CD4-positive, alpha-beta T cell (primary cell): ENCODE measurements at regions of chr2 and their contacts with region 1.

Region 1: GRCh38 chr2:119366649-119367471 is at the starts of genes C2orf76 and DBI:
- DNase-seq: peak; percentile 82 to 97 (median 88)
- ATAC-seq: peak; percentile 93
- H3K4me3 ChIP-seq: peak within 1 kb of the TSS; percentile 94
- H3K4me3 Mint-ChIP-seq: peak within 1 kb of the TSS; percentile 91
- H3K27ac ChIP-seq: peak within 1 kb of the TSS; percentile 59 to 76
- H3K27ac Mint-ChIP-seq: peak within 1 kb of the TSS; percentile 89
- H3K4me1 ChIP-seq: peaks cover 41% of the 10 kb centered on the region
- H3K4me1 Mint-ChIP-seq: peaks cover 59% of the 10 kb centered on the region
- H3K27me3 ChIP-seq: no peaks in the 10 kb centered on the region
- H3K27me3 Mint-ChIP-seq: no peaks in the 10 kb centered on the region
- CTCF ChIP-seq: no peak
- total RNA-seq, gene C2orf76: 2.8 to 4.5 TPM
- total RNA-seq, gene DBI: 23.6 to 27.4 TPM

Region 2: DNA sequence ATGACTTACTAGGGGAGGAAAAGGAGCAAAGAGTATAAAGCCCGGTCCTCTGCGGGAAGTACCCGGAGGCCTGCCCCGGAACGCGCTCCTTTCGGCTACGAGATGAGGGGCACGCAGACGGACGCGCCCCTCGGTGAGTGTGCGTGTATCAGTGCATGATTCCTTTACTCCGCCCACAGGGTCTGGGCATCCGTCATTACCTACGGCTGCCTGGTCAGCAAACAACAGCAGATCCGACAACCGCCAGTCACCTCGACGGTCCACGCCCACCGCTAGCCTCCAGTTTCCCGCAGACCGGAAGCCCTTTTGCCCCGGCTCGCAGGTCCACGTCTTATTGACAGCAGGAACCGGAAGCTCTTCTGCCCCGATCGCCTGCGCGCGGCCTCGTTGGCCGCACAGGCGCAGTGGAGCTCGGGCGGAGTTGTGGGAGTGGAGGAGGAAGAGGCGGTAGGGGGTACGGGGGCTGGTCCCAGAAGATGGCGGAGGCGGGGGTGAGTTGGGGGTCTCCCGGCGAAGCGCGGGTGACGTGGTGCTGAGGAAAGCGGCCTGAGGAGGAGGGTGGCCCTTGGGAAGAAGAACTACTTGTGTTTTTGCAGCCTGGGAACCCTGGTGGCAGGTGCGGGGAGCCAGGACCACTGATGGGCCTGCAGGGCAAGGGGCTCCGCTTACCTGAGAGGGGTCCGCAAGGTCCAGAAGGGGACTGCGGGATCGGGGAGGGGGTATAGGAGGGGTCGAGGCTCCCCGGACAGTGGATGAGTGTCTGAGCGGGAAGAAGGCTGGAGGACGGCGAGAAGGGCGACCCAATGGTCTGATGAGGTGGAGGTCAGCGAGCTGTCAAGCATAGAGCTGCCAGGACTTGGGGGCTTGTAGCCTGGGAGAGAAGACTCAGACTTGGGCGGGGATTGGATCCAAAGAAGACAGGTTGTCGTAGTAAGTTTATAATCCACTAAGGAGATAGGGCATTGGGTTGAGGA is 1278.5 kb before region 1 on chr2 and contains the start of gene INSIG2:
- CTCF ChIA-PET with region 1: no interaction called
- POLR2A ChIA-PET with region 1: no interaction called
- intact Hi-C with region 1: loop called in 1 of 2 experiments (anchors 10 kb)
- DNase-seq: peak; percentile 71 to 95 (median 81)
- ATAC-seq: peak; percentile 88
- H3K4me3 ChIP-seq: peak within 1 kb of the TSS; percentile 91
- H3K4me3 Mint-ChIP-seq: peak within 1 kb of the TSS; percentile 97
- H3K27ac ChIP-seq: peak within 1 kb of the TSS; percentile 58 to 61
- H3K27ac Mint-ChIP-seq: peak within 1 kb of the TSS; percentile 88
- H3K4me1 ChIP-seq: peaks cover 10% of the 10 kb centered on the region
- H3K4me1 Mint-ChIP-seq: peaks cover 38% of the 10 kb centered on the region
- H3K27me3 ChIP-seq: no peaks in the 10 kb centered on the region
- H3K27me3 Mint-ChIP-seq: no peaks in the 10 kb centered on the region
- CTCF ChIP-seq: no peak
- total RNA-seq, gene INSIG2: 7.3 to 7.7 TPM

Region 3: DNA sequence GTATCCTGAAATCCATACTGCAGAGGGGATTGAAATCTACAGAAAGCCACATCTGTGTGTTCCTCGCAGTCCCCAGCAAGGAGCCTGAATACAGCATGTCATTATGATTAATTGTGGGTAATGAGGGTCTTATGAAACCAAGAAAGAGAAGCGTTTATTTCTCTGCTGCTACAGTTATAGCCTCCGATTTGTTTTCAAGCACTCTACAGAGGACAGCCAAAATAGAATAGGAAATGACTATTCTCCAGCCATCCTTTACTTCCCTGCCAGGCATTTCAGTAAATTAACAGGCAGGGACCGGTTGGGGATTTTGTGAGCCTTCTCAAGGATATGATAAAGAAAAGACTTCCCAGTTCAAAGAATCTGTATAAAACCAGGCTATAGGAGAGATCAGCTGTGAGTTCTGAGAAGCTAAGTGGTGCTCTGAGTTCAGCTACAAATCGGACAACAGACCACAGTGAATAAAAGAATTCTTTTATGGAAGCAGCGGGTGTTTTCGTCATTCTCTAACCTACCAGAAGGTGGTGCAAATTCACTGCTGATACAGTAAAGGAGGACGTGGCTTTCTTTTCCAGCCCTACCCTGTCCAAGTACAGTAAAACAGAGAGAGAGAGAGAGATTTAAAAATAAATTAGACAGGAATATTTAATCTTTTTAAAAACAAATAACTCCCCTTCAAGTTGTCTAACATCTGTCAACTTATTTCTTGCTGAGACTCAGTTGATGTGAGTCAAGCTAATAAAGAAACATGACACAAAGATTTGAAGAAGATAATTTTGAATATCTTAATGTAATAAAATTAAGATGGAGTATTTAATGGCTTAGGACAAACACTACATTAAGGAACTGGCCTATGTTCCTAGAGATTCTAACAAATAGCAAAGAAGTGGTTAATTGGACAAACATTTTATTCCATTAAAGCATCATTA is 1144.9 kb before region 1 on chr2:
- CTCF ChIA-PET with region 1: no interaction called
- POLR2A ChIA-PET with region 1: no interaction called
- intact Hi-C with region 1: loop called in 1 of 2 experiments (anchors 10 kb)
- DNase-seq: peak in 9 of 14 experiments; percentile 6 to 77 (median 10)
- ATAC-seq: peak; percentile 75
- H3K4me3 ChIP-seq: no peak overlapping the region
- H3K4me3 Mint-ChIP-seq: peak overlapping the region; percentile 12
- H3K27ac ChIP-seq: no peak overlapping the region
- H3K27ac Mint-ChIP-seq: no peak overlapping the region
- H3K4me1 ChIP-seq: peaks cover 19% of the 10 kb centered on the region
- H3K4me1 Mint-ChIP-seq: peaks cover 28% of the 10 kb centered on the region
- H3K27me3 ChIP-seq: peaks cover 44 to 70% of the 10 kb centered on the region in 2 experiments
- H3K27me3 Mint-ChIP-seq: peaks cover 78% of the 10 kb centered on the region
- CTCF ChIP-seq: peak; percentile 87

Region 4: GRCh38 chr2:119311356-119311755 is 55.5 kb before region 1 on chr2:
- CTCF ChIA-PET with region 1: no interaction called
- POLR2A ChIA-PET with region 1: no interaction called
- intact Hi-C with region 1: no loop called
- DNase-seq: no peak
- ATAC-seq: no peak
- H3K4me3 ChIP-seq: no peak overlapping the region
- H3K4me3 Mint-ChIP-seq: no peak overlapping the region
- H3K27ac ChIP-seq: no peak overlapping the region
- H3K27ac Mint-ChIP-seq: no peak overlapping the region
- H3K4me1 ChIP-seq: no peaks in the 10 kb centered on the region
- H3K4me1 Mint-ChIP-seq: no peaks in the 10 kb centered on the region
- H3K27me3 ChIP-seq: no peaks in the 10 kb centered on the region
- H3K27me3 Mint-ChIP-seq: no peaks in the 10 kb centered on the region
- CTCF ChIP-seq: no peak

Region 5: DNA sequence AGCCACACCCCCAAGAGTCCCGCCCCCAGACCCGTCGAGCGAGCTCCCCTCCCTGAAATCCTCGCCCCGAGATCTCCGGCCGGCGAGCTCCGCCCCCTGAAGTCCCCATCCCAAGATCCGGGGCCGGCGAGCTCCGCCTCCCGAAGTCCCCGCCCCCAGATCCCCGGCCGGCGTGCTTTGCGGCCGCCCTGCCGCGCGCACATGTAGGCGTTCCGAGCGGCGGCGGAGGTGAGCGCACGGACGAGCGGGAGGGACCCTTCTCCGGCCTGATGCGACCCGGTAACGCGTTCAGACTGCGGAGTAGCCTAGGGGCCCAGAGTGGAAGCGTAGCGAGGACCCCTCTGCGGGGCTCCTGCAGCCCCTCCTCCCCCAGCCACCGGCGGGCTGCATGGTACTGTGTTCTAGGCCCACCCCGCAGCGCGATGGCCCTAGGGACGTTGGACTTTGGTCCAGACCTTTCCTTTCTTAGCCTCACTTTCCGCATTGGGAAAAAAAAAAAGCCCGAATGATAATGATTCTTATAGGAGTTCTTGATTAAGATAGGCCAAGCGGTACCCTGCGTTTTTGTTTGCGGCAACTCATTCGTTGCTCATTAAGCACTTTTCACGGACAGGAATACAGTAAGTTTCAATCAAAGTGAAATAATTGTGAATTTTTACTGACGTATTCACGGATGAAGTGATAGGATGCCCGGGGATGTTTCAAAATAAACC is 312.3 kb after region 1 on chr2 and contains the start of gene TMEM177:
- CTCF ChIA-PET with region 1: no interaction called
- POLR2A ChIA-PET with region 1: interaction called, 7 read pairs
- intact Hi-C with region 1: loop called in 1 of 2 experiments (anchors 5 kb)
- DNase-seq: peak; percentile 74 to 94 (median 87)
- ATAC-seq: peak; percentile 81
- H3K4me3 ChIP-seq: peak within 1 kb of the TSS; percentile 97
- H3K4me3 Mint-ChIP-seq: peak within 1 kb of the TSS; percentile 82
- H3K27ac ChIP-seq: peak within 1 kb of the TSS; percentile 56 to 67
- H3K27ac Mint-ChIP-seq: peak within 1 kb of the TSS; percentile 91
- H3K4me1 ChIP-seq: peaks cover 27% of the 10 kb centered on the region
- H3K4me1 Mint-ChIP-seq: peaks cover 46% of the 10 kb centered on the region
- H3K27me3 ChIP-seq: no peaks in the 10 kb centered on the region
- H3K27me3 Mint-ChIP-seq: no peaks in the 10 kb centered on the region
- CTCF ChIP-seq: no peak
- total RNA-seq, gene TMEM177: 3.6 to 4.0 TPM

Region 6: GRCh38 chr2:120252225-120253021 is 885.6 kb after region 1 on chr2 and contains the start of gene RALB:
- CTCF ChIA-PET with region 1: no interaction called
- POLR2A ChIA-PET with region 1: no interaction called
- intact Hi-C with region 1: loop called in 1 of 2 experiments (anchors 10 kb)
- DNase-seq: peak; percentile 95 to 99 (median 98)
- ATAC-seq: peak; percentile 95
- H3K4me3 ChIP-seq: peak within 1 kb of the TSS; percentile 83
- H3K4me3 Mint-ChIP-seq: peak within 1 kb of the TSS; percentile 97
- H3K27ac ChIP-seq: peak within 1 kb of the TSS; percentile 35 to 76
- H3K27ac Mint-ChIP-seq: peak within 1 kb of the TSS; percentile 87
- H3K4me1 ChIP-seq: peaks cover 20% of the 10 kb centered on the region
- H3K4me1 Mint-ChIP-seq: peaks cover 50% of the 10 kb centered on the region
- H3K27me3 ChIP-seq: peaks cover 0 to 3% of the 10 kb centered on the region in 2 experiments
- H3K27me3 Mint-ChIP-seq: peaks cover 8% of the 10 kb centered on the region
- CTCF ChIP-seq: no peak
- total RNA-seq, gene RALB: 3.1 to 3.6 TPM